Right ventricle myocardium inferior (tissue), 1 donor: ENCODE measurements at regions of chr11 and their contacts with region 1.

Region 1: DNA sequence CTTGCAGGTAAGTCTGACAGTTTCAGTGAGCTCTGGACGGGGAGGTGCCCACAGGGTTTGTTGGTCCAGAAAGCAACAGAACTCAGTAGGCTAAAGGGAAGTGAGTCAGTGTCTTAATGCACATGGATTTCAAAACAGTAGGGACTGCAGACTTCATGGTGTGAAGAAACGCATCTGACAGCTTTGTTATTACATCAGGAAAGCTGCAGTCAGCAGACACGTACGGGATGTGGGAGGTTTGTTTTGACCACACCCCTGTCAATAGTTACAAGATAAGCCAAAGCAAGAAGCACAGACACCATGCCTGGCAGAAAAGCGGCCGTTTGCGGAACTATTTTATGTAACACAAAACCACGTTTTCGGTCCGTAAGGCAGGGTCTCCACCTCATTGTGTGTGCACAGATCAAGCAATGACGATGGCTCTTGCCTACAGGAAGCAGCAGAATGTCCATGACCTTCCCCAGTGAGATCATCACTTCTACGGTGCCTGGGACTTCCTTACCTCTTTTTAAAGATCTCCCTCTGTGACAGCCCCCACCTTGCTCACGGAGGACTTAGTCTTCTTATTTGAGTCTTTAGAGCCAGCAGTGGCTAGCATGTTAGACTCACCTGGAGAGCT is 58.2 kb upstream of the FTH1 start:
- DNase-seq: peak; percentile 87
- ATAC-seq: peak; percentile 94

Region 2: DNA sequence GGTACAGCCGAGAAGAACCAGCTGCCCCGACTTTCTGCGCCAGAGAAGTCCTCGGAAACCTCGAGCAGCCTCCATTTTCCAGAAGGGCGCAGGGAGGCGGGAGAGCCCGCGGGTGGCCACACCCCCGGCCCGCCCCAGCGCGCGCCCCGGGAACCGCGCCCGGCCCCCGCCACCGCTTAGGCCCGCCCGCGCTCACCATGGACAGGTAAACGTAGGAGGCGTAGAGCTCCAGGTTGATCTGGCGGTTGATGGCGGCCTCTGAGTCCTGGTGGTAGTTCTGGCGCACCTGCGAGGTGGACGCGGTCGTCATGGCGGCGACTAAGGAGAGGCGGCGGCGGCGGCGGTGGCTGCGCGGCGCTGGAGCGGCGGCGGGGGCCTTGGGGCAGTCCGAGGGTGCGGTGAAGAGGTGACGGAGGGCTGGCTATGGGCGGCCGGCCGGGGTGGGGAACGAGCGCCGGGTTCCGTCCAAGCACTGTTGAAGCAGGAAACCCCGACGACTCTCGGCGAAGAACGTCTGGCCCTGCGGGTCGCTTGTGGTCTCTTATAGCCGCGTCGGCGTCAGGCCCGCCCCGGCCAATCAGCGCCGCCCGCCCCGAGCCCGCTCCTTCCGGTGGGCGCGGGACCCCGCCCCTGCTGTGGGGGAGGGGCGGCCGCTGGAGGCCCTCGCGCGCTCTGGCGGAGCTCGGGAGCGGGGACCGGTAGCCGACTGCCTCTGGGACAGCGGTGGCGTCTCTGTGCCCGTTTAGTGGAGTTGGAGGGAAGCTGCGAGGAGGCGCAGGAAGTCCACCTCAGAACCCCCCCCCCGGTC is 58.3 kb before region 1 on chr11 and contains the start of gene FTH1:
- intact Hi-C with region 1: loop called (anchors 1 kb)
- DNase-seq: peak; percentile 96
- ATAC-seq: peak; percentile 85
- total RNA-seq, gene FTH1: 2,493 TPM

Region 3: DNA sequence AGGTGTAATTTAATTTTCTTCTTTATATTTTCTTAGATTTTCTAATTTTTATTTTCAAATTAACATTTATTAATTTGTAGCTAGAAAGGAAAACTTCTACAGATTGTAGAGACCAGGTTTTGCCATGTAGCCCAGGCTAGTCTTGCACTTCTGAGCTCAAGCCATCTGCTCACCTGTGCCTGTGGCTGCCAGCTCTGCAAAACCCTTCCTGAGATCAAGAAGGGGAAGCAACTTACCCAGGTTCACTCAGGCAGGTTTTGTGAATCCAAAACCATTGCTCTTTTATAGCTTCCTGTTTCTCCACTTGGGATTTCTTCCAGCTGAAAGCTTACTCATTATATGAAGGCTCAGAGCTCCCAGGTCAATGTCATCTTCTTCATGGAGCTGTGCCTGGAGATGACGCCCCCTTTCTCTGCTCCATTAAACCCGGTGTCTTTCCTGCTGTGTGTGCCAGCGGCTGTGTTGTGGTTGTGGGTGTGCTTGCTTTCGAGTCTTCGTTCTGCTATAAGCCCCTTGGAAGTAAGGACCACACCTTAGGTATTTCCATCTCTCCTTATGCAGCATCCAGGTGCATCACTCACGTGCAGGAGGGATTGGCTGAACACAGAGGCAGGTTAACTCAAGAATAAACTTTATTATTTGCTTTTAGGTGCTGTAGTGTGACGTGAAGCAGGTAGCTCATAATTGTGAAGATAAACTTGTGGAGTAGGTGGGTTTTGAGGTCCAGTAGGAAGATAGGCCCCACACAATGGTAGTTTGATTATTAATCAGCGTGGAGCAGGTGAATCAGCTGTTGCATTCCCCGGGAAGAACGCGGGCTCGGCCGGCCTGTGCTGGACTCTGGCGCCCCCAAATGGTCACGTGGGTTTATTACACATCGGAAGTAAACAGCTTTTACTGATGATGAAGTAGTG is 56.0 kb after region 1 on chr11:
- intact Hi-C with region 1: no loop called
- DNase-seq: peak; percentile 92
- ATAC-seq: peak; percentile 74